MCF 10A (cell line): ENCODE measurements at regions of chr2 and their contacts with region 1.

Region 1: DNA sequence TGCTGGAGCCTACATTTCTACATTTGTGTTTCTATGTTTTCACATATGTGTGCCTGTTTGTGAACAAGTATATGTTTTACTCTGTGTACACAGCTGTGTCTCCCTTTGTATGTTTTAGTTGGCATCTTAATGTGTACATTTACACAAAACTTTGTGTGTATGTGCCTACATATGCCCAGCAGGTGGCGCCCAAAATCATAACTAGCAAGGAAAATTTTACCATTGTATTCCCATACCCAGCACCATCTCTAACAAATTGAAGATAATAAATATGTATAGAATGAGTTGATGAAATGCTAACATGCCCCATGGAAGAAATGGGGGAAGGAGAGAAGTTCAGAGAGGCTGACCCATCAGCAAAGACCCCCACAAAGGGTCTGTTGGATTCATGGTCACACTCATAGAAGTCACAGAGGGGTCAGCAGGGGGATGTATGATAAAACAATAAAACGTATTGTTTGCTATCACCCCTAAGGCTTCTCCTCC is 48.1 kb downstream of the PKDCC start:
- DNase-seq: peak; percentile 76
- H3K4me3 Mint-ChIP-seq: no peak overlapping the region
- H3K27ac Mint-ChIP-seq: no peak overlapping the region
- H3K4me1 Mint-ChIP-seq: no peaks in the 10 kb centered on the region
- H3K27me3 Mint-ChIP-seq: peaks cover 34% of the 10 kb centered on the region
- CTCF ChIP-seq: peak; percentile 70

Region 2: GRCh38 chr2:41994207-41994606 is 101.8 kb before region 1 on chr2:
- CTCF ChIA-PET with region 1: no interaction called
- POLR2A ChIA-PET with region 1: no interaction called
- intact Hi-C with region 1: no loop called
- DNase-seq: no peak
- H3K4me3 Mint-ChIP-seq: no peak overlapping the region
- H3K27ac Mint-ChIP-seq: no peak overlapping the region
- H3K4me1 Mint-ChIP-seq: no peaks in the 10 kb centered on the region
- H3K27me3 Mint-ChIP-seq: peaks cover 12% of the 10 kb centered on the region
- CTCF ChIP-seq: no peak

Region 3: GRCh38 chr2:42127425-42128424 is 31.8 kb after region 1 on chr2:
- CTCF ChIA-PET with region 1: interaction called, 25 read pairs
- POLR2A ChIA-PET with region 1: interaction called, 3 read pairs
- intact Hi-C with region 1: no loop called
- DNase-seq: peak; percentile 35
- H3K4me3 Mint-ChIP-seq: peak overlapping the region; percentile 33
- H3K27ac Mint-ChIP-seq: peak overlapping the region; percentile 84
- H3K4me1 Mint-ChIP-seq: peaks cover 46% of the 10 kb centered on the region
- H3K27me3 Mint-ChIP-seq: no peaks in the 10 kb centered on the region
- CTCF ChIP-seq: no peak

Region 4: GRCh38 chr2:42238644-42239288 is 142.8 kb after region 1 on chr2:
- CTCF ChIA-PET with region 1: interaction called, 222 read pairs
- POLR2A ChIA-PET with region 1: interaction called, 7 read pairs
- intact Hi-C with region 1: loop called (anchors 1 kb)
- DNase-seq: peak; percentile 65
- H3K4me3 Mint-ChIP-seq: no peak overlapping the region
- H3K27ac Mint-ChIP-seq: no peak overlapping the region
- H3K4me1 Mint-ChIP-seq: no peaks in the 10 kb centered on the region
- H3K27me3 Mint-ChIP-seq: no peaks in the 10 kb centered on the region
- CTCF ChIP-seq: peak; percentile 64

Region 5: DNA sequence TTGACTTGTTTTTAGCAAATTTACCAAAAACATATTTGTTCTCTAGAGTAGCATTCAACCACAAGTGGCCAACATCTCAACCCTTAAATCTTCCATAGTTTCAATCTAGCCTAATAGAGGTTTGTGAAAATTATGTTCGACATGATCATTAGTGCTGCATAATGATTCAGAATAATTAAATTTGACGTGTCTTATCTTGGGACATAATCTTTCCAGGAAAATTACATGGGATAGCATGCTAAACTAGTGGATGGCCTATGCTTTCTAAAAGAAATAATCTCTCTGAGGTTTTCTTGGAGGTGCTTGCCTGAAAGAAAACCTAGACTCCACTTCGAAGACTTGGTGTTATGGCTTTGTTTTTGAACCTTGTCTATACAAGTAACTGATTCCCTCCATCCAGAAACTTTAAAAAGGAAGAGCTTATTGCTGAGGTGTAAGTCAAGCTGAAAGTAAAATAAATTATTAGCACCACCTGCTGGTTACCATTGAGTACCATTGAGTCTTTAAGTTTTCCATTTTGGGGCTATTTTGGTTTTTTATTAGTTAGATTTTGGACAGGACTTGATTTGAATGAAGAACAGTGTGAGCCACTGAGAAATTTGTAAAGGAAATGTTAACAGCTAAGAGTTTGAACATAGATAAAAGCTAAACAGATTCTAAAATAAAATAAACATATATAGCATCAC is 232.3 kb after region 1 on chr2:
- CTCF ChIA-PET with region 1: interaction called, 82 read pairs
- POLR2A ChIA-PET with region 1: interaction called, 3 read pairs
- intact Hi-C with region 1: loop called (anchors 1 kb)
- DNase-seq: peak; percentile 36
- H3K4me3 Mint-ChIP-seq: no peak overlapping the region
- H3K27ac Mint-ChIP-seq: no peak overlapping the region
- H3K4me1 Mint-ChIP-seq: peaks cover 10% of the 10 kb centered on the region
- H3K27me3 Mint-ChIP-seq: no peaks in the 10 kb centered on the region
- CTCF ChIP-seq: peak; percentile 37